ENCODE measurements at regions of chr3 and their contacts with region 1.

Region 1: GRCh38 chr3:149120051-149120972 is 9.1 kb upstream of the HPS3 start:
- DNase-seq: no peak
- H3K4me3 ChIP-seq: no peak overlapping the region
- H3K27ac ChIP-seq: peak overlapping the region in 1 of 2 donors; percentile 52
- H3K4me1 ChIP-seq: no peaks in the 10 kb centered on the region
- H3K27me3 ChIP-seq: no peaks in the 10 kb centered on the region
- CTCF ChIP-seq: peak; percentile 56 to 71 (median 57)
- EP300 ChIP-seq: no peak
- POLR2A ChIP-seq: no peak

Region 2: GRCh38 chr3:149145356-149145755 is 25.0 kb after region 1 on chr3:
- intact Hi-C with region 1: loop called in 1 of 4 experiments (anchors 1 kb)
- DNase-seq: no peak
- H3K4me3 ChIP-seq: no peak overlapping the region
- H3K27ac ChIP-seq: no peak overlapping the region
- H3K4me1 ChIP-seq: no peaks in the 10 kb centered on the region
- H3K27me3 ChIP-seq: no peaks in the 10 kb centered on the region
- CTCF ChIP-seq: no peak
- EP300 ChIP-seq: no peak
- POLR2A ChIP-seq: no peak